PC-9 (cell line): ENCODE measurements at regions of chr4 and their contacts with region 1.

Region 1: GRCh38 chr4:41538017-41538733 is at the start of gene LIMCH1:
- DNase-seq: peak in 1 of 2 experiments; percentile 65
- H3K4me3 ChIP-seq: peak within 1 kb of the TSS; percentile 44
- H3K27ac ChIP-seq: peak within 1 kb of the TSS; percentile 96
- H3K4me1 ChIP-seq: peaks cover 65% of the 10 kb centered on the region
- H3K27me3 ChIP-seq: no peaks in the 10 kb centered on the region
- CTCF ChIP-seq: no peak
- total RNA-seq, gene LIMCH1: 252 and 339 TPM in 2 replicates

Region 2: DNA sequence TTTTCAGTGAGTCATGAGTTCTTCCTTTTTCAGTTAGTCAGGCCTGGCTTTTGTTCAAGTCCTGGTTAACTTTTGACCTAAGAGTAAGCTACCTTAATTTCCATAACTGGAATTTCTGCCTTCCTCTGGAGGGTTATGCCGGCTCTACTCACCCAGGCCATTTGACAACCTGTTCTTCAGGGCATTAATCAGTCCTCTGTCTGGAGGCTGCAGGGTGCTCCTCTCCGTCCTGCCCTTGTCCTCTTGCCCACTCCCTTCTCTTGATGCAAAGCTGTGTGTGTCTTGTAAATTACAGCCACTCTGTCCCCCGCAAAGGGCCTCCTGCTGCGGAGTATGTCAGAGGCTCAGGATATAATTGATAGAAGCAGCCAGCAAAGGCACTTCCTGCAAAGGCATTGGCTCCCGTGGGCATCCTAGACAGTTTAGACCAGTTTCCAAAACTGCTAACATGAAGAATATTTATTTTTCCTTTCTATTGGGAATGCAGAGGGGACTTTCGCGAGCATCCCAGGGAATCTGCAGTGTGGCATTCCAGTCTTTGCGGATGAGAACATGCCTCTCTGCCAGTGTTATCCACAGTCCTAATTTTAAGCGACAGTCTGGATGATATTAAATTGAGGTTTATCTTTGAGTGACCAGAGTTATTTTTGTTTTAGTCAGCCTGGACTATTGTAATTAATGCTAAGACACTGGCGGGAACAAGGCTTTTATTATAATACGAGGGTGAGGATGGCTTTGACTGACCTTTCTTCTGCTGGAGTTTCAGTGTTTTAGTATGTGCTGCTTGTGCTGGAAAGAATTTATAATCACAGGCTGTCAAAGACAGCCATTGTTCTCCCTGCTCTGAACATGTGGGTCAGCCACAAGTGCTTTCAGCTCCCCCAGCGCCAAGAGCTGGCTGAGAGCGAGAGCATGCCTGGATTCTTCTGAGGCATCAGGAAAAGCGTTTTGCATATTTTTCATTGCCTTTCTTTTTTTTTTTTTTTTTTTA is 74.0 kb after region 1 on chr4:
- CTCF ChIA-PET with region 1: interaction called, 6 read pairs
- POLR2A ChIA-PET with region 1: interaction called, 3 read pairs
- intact Hi-C with region 1: loop called (anchors 1 kb)
- DNase-seq: peak; percentile 68 to 94
- H3K4me3 ChIP-seq: peak overlapping the region; percentile 37; the same call in 1 of the 2 replicates
- H3K27ac ChIP-seq: peak overlapping the region; percentile 82
- H3K4me1 ChIP-seq: peaks cover 43% of the 10 kb centered on the region
- H3K27me3 ChIP-seq: no peaks in the 10 kb centered on the region
- CTCF ChIP-seq: no peak

Region 3: DNA sequence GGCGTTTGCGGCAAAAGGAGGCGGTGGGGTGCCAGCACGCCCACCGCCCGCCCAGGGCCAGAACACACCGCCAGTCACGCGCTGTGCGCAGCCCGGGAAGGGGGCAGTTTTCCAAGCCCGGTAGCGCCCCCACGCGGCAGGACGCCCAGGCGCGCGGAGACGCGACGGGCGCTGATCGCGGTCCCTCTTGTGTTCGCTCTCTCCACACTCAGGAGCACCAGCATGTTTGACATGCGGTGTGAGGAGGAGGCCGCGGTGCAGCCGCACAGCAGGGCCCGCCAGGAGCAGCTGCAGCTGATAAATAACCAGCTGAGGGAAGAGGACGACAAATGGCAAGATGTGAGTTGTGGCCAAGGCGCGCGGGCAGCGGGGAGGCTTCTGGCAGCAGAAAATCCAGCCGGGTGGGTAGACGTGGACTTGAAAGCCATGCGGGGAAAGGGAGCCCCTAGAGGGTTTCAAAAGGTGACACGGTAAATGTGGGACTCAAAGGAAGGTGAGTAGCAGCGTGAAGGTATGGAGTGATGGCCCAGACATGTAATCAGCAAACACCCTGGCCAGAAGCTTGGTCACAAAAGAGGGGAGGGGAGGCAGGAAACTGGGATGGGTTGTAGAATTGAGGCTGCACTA is 106.2 kb after region 1 on chr4:
- CTCF ChIA-PET with region 1: no interaction called
- POLR2A ChIA-PET with region 1: interaction called, 4 read pairs
- intact Hi-C with region 1: loop called (anchors 5 kb)
- DNase-seq: no peak
- H3K4me3 ChIP-seq: no peak overlapping the region
- H3K27ac ChIP-seq: no peak overlapping the region
- H3K4me1 ChIP-seq: no peaks in the 10 kb centered on the region
- H3K27me3 ChIP-seq: no peaks in the 10 kb centered on the region
- CTCF ChIP-seq: no peak